Caco-2 (cell line): ENCODE measurements at regions of chr6 and their contacts with region 1.

Region 1: DNA sequence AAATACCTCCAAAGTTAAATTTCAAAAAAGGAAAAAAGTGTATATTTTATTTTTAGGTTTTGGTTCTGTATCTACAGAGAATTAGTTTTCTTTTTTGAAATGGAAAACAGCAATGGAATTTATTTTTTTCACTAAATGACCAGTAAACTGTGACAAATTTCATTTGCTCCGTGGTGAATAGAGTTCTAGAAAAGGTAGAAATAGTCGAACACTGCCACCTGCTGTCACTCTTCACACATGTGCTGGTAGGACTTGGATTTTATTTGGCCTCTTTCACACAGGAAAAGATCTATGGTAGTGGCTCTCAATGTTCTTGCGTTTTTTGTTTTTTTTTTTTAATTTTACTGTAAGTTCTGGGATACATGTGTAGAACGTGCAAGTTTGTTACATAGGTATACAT is 312.5 kb downstream of the EYA4 start:
- DNase-seq: peak in 1 of 2 experiments; percentile 47
- H3K4me3 ChIP-seq: no peak overlapping the region
- H3K4me3 Mint-ChIP-seq: no peak overlapping the region
- H3K27ac Mint-ChIP-seq: no peak overlapping the region
- H3K4me1 ChIP-seq: peaks cover 7% of the 10 kb centered on the region; the same call in 1 of the 2 replicates
- H3K4me1 Mint-ChIP-seq: peaks cover 8% of the 10 kb centered on the region
- H3K27me3 ChIP-seq: no peaks in the 10 kb centered on the region
- H3K27me3 Mint-ChIP-seq: no peaks in the 10 kb centered on the region
- CTCF ChIP-seq: peak; percentile 59 to 65

Region 2: DNA sequence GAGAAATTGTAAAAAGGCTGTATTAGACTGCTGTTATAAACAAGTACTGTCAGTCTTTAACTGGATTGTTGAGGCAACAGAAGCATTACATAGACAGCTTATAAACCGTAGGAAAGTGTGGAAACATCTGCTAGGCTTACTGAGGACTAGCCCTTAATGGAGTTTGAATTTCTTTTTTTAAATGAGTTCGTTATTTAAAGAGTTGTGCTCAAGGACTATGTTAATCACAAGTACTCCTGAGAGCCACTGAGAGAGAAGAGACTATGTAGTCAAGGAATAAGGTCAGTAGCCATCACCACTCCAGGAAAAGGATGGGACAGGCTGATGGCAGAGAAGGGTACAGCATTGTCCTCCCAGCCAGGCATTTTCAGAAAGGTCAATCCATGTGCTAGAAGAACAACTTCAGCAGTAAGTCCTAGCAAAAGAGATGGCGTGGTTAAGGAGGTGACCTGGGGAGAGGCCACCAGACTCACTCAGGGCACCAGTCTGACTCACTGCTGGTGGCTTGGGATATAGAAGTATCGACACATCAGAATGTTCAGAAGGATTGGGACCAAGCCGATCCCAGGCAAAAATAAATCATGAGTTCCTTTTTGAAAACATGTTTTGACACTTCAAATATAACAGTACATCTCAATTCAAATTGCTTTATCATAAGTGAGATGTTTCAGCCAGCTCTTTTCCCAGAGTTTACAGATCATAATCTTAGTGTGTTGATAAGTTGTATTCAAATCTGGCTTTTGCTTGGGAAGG is 732.8 kb before region 1 on chr6:
- CTCF ChIA-PET with region 1: no interaction called
- POLR2A ChIA-PET with region 1: no interaction called
- intact Hi-C with region 1: loop called (anchors 2 kb)
- DNase-seq: peak in 1 of 2 experiments; percentile 38
- H3K4me3 ChIP-seq: no peak overlapping the region
- H3K4me3 Mint-ChIP-seq: peak overlapping the region; percentile 20
- H3K27ac Mint-ChIP-seq: peak overlapping the region; percentile 71
- H3K4me1 ChIP-seq: no peaks in the 10 kb centered on the region; the same call in none of the 2 replicates
- H3K4me1 Mint-ChIP-seq: peaks cover 17% of the 10 kb centered on the region
- H3K27me3 ChIP-seq: no peaks in the 10 kb centered on the region
- H3K27me3 Mint-ChIP-seq: no peaks in the 10 kb centered on the region
- CTCF ChIP-seq: no peak

Region 3: GRCh38 chr6:132962936-132963868 is 590.5 kb before region 1 on chr6:
- CTCF ChIA-PET with region 1: no interaction called
- POLR2A ChIA-PET with region 1: no interaction called
- intact Hi-C with region 1: loop called (anchors 1 kb)
- DNase-seq: peak; percentile 69 to 81
- H3K4me3 ChIP-seq: no peak overlapping the region
- H3K4me3 Mint-ChIP-seq: no peak overlapping the region
- H3K27ac Mint-ChIP-seq: no peak overlapping the region
- H3K4me1 ChIP-seq: no peaks in the 10 kb centered on the region
- H3K4me1 Mint-ChIP-seq: no peaks in the 10 kb centered on the region
- H3K27me3 ChIP-seq: no peaks in the 10 kb centered on the region
- H3K27me3 Mint-ChIP-seq: peaks cover 6% of the 10 kb centered on the region
- CTCF ChIP-seq: peak; percentile 87 to 88

Region 4: GRCh38 chr6:133184798-133185372 is 368.8 kb before region 1 on chr6:
- CTCF ChIA-PET with region 1: no interaction called
- POLR2A ChIA-PET with region 1: no interaction called
- intact Hi-C with region 1: loop called (anchors 1 kb)
- DNase-seq: no peak
- H3K4me3 ChIP-seq: no peak overlapping the region
- H3K4me3 Mint-ChIP-seq: no peak overlapping the region
- H3K27ac Mint-ChIP-seq: no peak overlapping the region
- H3K4me1 ChIP-seq: peaks cover 16% of the 10 kb centered on the region; the same call in 1 of the 2 replicates
- H3K4me1 Mint-ChIP-seq: no peaks in the 10 kb centered on the region
- H3K27me3 ChIP-seq: no peaks in the 10 kb centered on the region
- H3K27me3 Mint-ChIP-seq: no peaks in the 10 kb centered on the region
- CTCF ChIP-seq: peak; percentile 38 to 40

Region 5: DNA sequence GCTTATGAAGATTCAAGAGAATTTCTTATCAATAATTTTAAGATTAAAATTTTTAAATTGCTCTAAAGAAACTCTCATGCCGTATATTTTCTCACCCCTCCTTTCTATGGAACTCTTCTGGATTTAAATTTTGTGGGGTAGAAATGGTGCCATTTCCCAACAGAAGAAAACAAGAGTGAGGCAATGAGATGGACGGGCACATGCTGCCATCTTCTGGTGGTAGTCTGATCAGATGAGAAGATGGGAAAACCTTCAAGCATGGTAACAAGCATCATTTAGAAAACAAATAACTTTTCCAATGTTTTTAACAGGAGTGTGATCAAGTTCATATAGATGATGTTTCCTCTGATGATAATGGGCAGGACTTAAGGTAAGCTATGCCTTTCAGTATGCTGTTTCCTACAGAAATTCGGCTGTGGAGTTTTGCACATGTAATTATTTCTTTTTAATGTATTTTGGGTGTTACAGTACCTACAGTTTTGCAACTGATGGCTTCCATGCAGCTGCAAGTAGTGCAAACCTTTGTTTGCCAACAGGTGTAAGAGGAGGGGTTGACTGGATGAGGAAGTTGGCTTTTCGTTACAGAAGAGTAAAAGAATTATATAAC is 41.1 kb before region 1 on chr6:
- CTCF ChIA-PET with region 1: no interaction called
- POLR2A ChIA-PET with region 1: no interaction called
- intact Hi-C with region 1: loop called (anchors 2 kb)
- DNase-seq: peak in 1 of 2 experiments; percentile 50
- H3K4me3 ChIP-seq: no peak overlapping the region
- H3K4me3 Mint-ChIP-seq: no peak overlapping the region
- H3K27ac Mint-ChIP-seq: no peak overlapping the region
- H3K4me1 ChIP-seq: no peaks in the 10 kb centered on the region
- H3K4me1 Mint-ChIP-seq: no peaks in the 10 kb centered on the region
- H3K27me3 ChIP-seq: no peaks in the 10 kb centered on the region
- H3K27me3 Mint-ChIP-seq: peaks cover 2% of the 10 kb centered on the region
- CTCF ChIP-seq: peak; percentile 57 to 63

Region 6: DNA sequence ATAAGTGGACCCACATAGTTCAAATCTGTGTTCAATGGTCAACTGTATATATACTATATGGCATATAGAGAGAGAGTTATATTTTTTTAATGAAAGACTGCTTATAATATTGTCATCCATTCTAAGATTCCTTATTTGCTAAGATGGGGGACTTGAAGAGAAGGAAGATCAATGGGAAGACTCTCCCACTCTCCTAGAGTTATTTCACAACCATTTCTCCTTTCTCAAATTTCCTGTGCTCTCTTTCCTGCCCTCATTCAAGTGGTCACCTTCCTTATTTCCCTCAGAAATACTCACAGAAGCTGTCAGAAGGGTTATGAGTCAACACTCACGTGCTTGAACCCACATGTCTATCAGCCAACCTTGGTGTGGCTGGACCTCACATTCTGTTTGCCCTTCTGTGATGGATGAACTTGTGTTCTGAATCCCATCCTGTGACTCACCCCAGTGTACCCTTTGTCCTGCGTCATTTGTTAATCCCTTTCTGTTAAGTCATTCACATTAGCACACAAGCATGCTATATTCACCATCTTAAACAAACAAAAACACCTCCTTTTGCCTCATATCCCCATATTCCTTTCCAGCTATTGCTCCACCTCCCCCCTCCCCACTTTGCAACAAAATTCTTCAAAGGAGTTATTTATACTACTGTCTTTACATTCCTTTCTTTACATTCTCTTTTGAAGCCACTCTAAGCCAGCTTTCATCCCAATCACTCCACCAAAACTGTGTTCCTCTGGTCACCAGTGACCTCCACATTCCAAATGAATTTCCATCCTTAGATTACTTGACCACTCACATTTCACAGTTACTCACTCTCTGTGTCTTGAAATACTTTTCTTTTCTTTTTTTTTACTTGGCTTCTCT is 56.0 kb after region 1 on chr6:
- CTCF ChIA-PET with region 1: no interaction called
- POLR2A ChIA-PET with region 1: no interaction called
- intact Hi-C with region 1: no loop called
- DNase-seq: peak; percentile 79 to 84
- H3K4me3 ChIP-seq: no peak overlapping the region
- H3K4me3 Mint-ChIP-seq: no peak overlapping the region
- H3K27ac Mint-ChIP-seq: no peak overlapping the region
- H3K4me1 ChIP-seq: peaks cover 33% of the 10 kb centered on the region
- H3K4me1 Mint-ChIP-seq: no peaks in the 10 kb centered on the region
- H3K27me3 ChIP-seq: no peaks in the 10 kb centered on the region
- H3K27me3 Mint-ChIP-seq: no peaks in the 10 kb centered on the region
- CTCF ChIP-seq: no peak